Dorsolateral prefrontal cortex (tissue), 120 donors: ENCODE measurements at regions of chr1 and their contacts with region 1.

Region 1: GRCh38 chr1:42846257-42847110 is at the start of gene ZNF691:
- DNase-seq: peak; percentile 85 to 97 (median 94)
- H3K4me3 ChIP-seq: peak within 1 kb of the TSS; percentile 66 to 100 (median 93)
- H3K27ac ChIP-seq: peak within 1 kb of the TSS in 57 of 59 donors; percentile 17 to 94 (median 84)
- H3K27me3 ChIP-seq: no peaks in the 10 kb centered on the region
- CTCF ChIP-seq: peak in 53 of 56 donors; percentile 20 to 74 (median 60)
- total RNA-seq, gene ZNF691: 5.0 to 13.7 (median 8.4) TPM

Region 2: DNA sequence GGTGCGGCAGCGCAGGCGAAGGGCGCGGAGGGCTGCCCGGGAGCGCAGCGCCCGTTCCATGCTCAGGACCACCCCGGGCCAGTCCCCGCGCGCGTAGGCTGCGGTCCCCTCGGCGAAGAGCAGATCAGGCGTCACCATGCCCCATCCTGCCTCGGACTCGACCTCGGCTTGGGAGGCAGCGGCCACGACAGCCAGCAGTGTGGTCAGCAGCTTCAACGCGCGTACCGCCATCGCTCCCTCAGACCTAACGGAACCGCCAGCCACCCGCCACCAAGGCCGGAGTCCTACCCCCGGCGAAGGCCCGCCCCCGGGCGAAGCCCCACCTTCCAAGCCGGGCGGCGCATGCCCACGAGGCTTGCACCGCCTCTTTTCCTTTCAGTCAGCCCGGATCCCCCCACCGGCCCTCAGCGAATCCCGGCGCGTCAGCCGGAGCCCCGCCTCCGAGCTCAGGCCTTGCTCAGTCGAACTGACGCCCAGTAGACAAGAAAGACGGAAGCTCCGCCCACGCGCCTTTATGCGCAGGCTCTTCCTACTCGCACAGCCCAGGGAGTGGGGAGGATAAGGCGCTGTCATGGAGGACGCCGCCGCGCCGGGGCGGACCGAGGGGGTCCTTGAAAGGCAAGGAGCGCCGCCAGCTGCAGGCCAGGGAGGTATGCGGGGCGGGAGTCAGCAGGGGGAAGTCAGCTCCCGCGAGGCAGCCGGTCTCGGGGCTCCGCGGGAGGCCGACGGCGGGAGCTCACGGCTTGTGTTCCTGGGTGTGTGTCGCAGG is 79.6 kb before region 1 on chr1 and contains the starts of genes C1orf50 and P3H1:
- intact Hi-C with region 1: loop called (anchors 2 to 5 kb)
- DNase-seq: peak; percentile 99 to 100 (median 100)
- H3K4me3 ChIP-seq: peak within 1 kb of the TSS; percentile 75 to 100 (median 96)
- H3K27ac ChIP-seq: peak within 1 kb of the TSS; percentile 38 to 97 (median 88)
- H3K27me3 ChIP-seq: no peaks in the 10 kb centered on the region
- CTCF ChIP-seq: peak in 25 of 56 donors; percentile 5 to 62 (median 26)
- total RNA-seq, gene C1orf50: 5.1 to 19.5 (median 10.6) TPM
- total RNA-seq, gene P3H1: 13.8 to 34.7 (median 21.9) TPM

Region 3: GRCh38 chr1:42816585-42817434 is 29.7 kb before region 1 on chr1 and contains the starts of genes ERMAP and SVBP:
- intact Hi-C with region 1: loop called (anchors 1 to 2 kb)
- DNase-seq: peak; percentile 81 to 95 (median 90)
- H3K4me3 ChIP-seq: peak within 1 kb of the TSS; percentile 64 to 94 (median 79)
- H3K27ac ChIP-seq: peak within 1 kb of the TSS; percentile 79 to 99 (median 96)
- H3K27me3 ChIP-seq: no peaks in the 10 kb centered on the region
- CTCF ChIP-seq: peak in 19 of 56 donors; percentile 5 to 52 (median 22)
- total RNA-seq, gene ERMAP: 5.9 to 20.1 (median 10.3) TPM
- total RNA-seq, gene SVBP: 12.2 to 34.0 (median 22.7) TPM

Region 4: GRCh38 chr1:42958488-42959319 is 112.2 kb after region 1 on chr1 and contains the start of gene SLC2A1:
- intact Hi-C with region 1: loop called in 1 of 2 experiments (anchors 5 kb)
- DNase-seq: peak; percentile 93 to 98 (median 97)
- H3K4me3 ChIP-seq: peak within 1 kb of the TSS; percentile 61 to 95 (median 87)
- H3K27ac ChIP-seq: peak within 1 kb of the TSS; percentile 61 to 97 (median 91)
- H3K27me3 ChIP-seq: no peaks in the 10 kb centered on the region
- CTCF ChIP-seq: peak in 13 of 56 donors; percentile 5 to 37 (median 13)
- total RNA-seq, gene SLC2A1: 36.8 to 290 (median 105) TPM

Region 5: DNA sequence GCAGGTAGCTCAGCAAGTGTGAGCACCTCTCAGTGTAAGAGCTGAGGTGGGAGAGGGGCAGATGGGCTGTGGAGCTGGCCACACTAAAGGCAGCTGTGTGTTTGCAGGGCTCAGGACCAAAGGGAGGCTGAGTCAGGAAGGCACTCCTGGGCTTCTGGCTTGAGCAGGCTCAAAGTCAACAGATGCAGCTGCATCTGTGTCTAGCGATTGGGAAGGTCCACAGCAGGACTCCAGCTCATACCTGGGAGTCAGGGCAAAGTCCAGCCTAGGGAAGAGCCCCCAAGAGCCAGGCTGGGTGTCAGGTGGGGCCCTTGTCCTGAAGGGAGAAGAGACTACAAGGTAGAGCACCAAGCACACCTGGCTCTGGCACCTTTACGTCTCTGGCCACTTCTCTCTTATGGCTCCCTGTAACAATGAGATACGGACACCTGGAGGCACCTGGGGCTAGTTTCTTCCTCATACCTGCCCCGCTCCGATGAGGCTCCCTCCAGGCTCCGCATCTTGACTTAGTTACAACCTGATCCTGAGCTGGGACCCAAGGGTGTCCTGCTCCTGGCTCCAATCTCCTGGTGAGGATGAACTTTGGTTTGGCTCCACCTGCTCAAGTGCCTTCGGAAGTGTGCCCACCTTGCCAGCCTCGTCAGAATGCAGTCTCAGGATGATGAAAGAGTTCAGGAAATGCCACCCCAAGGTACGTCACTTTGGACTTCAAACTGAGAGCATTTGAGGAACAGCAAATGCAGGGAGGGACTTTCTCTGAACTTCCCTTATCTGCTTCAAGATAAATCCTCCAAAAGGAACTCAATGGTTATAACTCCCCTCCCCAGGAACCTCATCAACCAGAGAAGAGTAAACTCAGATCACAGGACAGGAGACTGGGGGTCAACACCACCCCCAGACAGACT is 133.7 kb after region 1 on chr1:
- intact Hi-C with region 1: no loop called
- DNase-seq: no peak
- H3K4me3 ChIP-seq: no peak overlapping the region
- H3K27ac ChIP-seq: no peak overlapping the region
- H3K27me3 ChIP-seq: no peaks in the 10 kb centered on the region
- CTCF ChIP-seq: no peak

Region 6: DNA sequence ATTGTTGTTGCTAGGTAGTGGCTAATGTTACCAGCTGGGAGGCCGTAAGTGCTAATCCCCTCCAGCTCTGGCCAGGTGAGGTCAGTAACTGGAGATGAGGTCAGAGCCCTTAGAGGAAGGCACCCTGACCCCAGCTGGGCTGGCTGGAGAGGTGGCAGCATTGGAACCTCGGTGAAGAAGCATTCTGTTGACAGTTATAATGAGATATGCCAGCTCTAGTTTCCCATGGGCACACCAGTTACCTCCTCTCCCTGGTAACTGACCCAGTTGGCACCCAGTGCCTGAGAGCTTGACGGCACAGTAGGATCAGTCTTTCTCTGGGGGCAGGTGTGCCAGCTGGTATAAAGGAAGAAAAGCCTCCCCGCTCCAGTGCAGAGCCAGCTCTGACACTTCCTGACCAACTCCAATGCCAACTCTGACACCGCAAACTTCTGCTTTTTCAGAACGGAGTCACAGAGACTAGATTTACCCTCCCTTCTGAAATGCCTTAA is 147.2 kb after region 1 on chr1:
- intact Hi-C with region 1: no loop called
- DNase-seq: no peak
- H3K4me3 ChIP-seq: no peak overlapping the region
- H3K27ac ChIP-seq: no peak overlapping the region
- H3K27me3 ChIP-seq: no peaks in the 10 kb centered on the region
- CTCF ChIP-seq: no peak